Posterior cingulate gyrus (tissue), 11 donors: ENCODE measurements at regions of chr16 and their contacts with region 1.

Region 1: DNA sequence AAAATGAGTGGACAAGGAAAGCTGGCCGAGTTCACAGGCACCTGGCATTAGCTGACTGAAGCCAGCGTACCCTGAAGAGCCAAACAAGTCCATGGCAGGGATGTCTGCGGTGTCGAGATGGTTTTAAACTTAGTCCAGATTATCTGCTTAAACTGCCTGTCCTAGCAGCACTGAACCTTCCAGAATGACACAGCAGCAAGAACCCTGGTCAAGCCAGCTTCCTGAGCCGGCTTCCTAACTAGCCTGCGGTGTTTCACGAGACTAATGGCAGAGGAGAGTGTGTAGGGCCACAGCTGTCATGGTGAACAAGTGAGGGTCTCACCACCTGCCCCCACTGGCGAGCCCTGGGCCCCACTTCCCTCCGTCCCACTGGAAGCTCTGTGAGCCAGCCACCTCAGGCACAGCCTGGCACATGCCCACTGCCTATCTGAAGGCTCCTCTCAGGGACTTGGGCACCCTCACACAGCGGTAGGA is 28.8 kb upstream of the MTSS2 start:
- DNase-seq: no peak

Region 2: GRCh38 chr16:70759666-70760065 is 45.0 kb after region 1 on chr16:
- intact Hi-C with region 1: loop called (anchors 5 kb)
- DNase-seq: no peak